ENCODE measurements at regions of chr5 and their contacts with region 1.

Region 1: GRCh38 chr5:94218374-94218773 is 400.0 kb downstream of the KIAA0825 start:
- DNase-seq: no peak
- ATAC-seq: no peak
- H3K4me3 ChIP-seq: no peak overlapping the region
- H3K4me3 Mint-ChIP-seq: no peak overlapping the region
- H3K27ac ChIP-seq: no peak overlapping the region
- H3K27ac Mint-ChIP-seq: no peak overlapping the region
- H3K4me1 ChIP-seq: no peaks in the 10 kb centered on the region
- H3K4me1 Mint-ChIP-seq: no peaks in the 10 kb centered on the region
- H3K27me3 ChIP-seq: no peaks in the 10 kb centered on the region
- H3K27me3 Mint-ChIP-seq: no peaks in the 10 kb centered on the region
- CTCF ChIP-seq: no peak

Region 2: GRCh38 chr5:94066437-94067207 is 151.8 kb before region 1 on chr5:
- CTCF ChIA-PET with region 1: no interaction called
- POLR2A ChIA-PET with region 1: no interaction called
- intact Hi-C with region 1: no loop called
- DNase-seq: no peak
- ATAC-seq: no peak
- H3K4me3 ChIP-seq: no peak overlapping the region
- H3K4me3 Mint-ChIP-seq: no peak overlapping the region
- H3K27ac ChIP-seq: no peak overlapping the region
- H3K27ac Mint-ChIP-seq: no peak overlapping the region
- H3K4me1 ChIP-seq: peaks cover 14% of the 10 kb centered on the region
- H3K4me1 Mint-ChIP-seq: peaks cover 41% of the 10 kb centered on the region
- H3K27me3 ChIP-seq: no peaks in the 10 kb centered on the region
- H3K27me3 Mint-ChIP-seq: no peaks in the 10 kb centered on the region
- CTCF ChIP-seq: no peak

Region 3: DNA sequence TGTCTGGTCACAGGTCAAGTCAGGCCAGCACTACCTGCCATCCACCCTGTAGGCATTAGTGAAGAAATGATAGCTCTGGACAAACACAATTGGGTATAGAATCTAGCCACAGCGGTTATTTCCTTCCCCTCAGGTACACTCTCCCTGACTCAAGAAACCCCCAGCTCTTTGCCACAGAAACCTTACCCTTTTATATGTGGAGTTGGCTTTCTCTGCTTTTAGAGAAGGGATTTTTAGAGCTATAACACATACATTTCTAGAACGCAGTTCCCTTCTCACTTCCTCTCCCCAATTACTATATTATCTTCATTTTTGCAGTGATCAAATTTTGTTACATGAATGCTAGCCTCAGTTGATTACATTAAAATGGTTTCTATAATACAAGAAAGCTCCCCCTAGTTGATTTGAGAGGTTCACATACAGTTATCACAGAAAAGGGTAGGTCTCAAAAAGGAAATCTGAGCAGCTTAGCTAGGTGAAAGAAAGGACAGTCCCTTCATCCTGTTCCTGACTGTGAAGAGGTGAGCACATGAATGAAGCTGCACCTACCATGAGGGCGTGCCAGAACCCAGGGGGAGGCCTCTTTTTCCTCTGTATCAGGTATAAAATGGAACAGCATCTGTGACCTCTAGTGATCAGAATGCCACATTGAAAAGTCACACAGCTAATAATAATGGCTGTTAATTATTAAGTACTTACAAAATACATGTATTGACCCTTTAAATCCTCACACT is 25.5 kb before region 1 on chr5:
- CTCF ChIA-PET with region 1: no interaction called
- POLR2A ChIA-PET with region 1: no interaction called
- intact Hi-C with region 1: no loop called
- DNase-seq: no peak
- ATAC-seq: no peak
- H3K4me3 ChIP-seq: no peak overlapping the region
- H3K4me3 Mint-ChIP-seq: no peak overlapping the region
- H3K27ac ChIP-seq: no peak overlapping the region
- H3K27ac Mint-ChIP-seq: no peak overlapping the region
- H3K4me1 ChIP-seq: no peaks in the 10 kb centered on the region
- H3K4me1 Mint-ChIP-seq: no peaks in the 10 kb centered on the region
- H3K27me3 ChIP-seq: no peaks in the 10 kb centered on the region
- H3K27me3 Mint-ChIP-seq: no peaks in the 10 kb centered on the region
- CTCF ChIP-seq: no peak

Region 4: GRCh38 chr5:94228404-94229190 is 10.2 kb after region 1 on chr5:
- CTCF ChIA-PET with region 1: no interaction called
- POLR2A ChIA-PET with region 1: no interaction called
- intact Hi-C with region 1: loop called in 1 of 2 experiments (anchors 1 kb)
- DNase-seq: no peak
- ATAC-seq: no peak
- H3K4me3 ChIP-seq: no peak overlapping the region
- H3K4me3 Mint-ChIP-seq: no peak overlapping the region
- H3K27ac ChIP-seq: no peak overlapping the region
- H3K27ac Mint-ChIP-seq: no peak overlapping the region
- H3K4me1 ChIP-seq: no peaks in the 10 kb centered on the region
- H3K4me1 Mint-ChIP-seq: no peaks in the 10 kb centered on the region
- H3K27me3 ChIP-seq: no peaks in the 10 kb centered on the region
- H3K27me3 Mint-ChIP-seq: no peaks in the 10 kb centered on the region
- CTCF ChIP-seq: no peak

Measured in CD4-positive, alpha-beta T cell (primary cell).